GM12878 (cell line): ENCODE measurements at regions of chr1 and their contacts with region 1.

Region 1: GRCh38 chr1:206521143-206521542 is 13.8 kb downstream of the RASSF5 start:
- DNase-seq: no peak
- ATAC-seq: no peak
- H3K4me3 ChIP-seq: no peak overlapping the region
- H3K27ac ChIP-seq: no peak overlapping the region
- H3K4me1 ChIP-seq: peaks cover 4% of the 10 kb centered on the region; the same call in 1 of the 2 replicates
- H3K27me3 ChIP-seq: no peaks in the 10 kb centered on the region
- CTCF ChIP-seq: no peak
- EP300 ChIP-seq: no peak
- POLR2A ChIP-seq: no peak
- RAD21 ChIP-seq: no peak

Region 2: GRCh38 chr1:206507284-206508129 is 13.6 kb before region 1 on chr1 and contains the start of gene RASSF5:
- CTCF ChIA-PET with region 1: interaction called, 23 read pairs
- POLR2A ChIA-PET with region 1: interaction called, 14 read pairs
- RAD21 ChIA-PET with region 1: interaction called, 6 read pairs
- SMC1A ChIA-PET with region 1: interaction called, 11 read pairs
- in situ Hi-C with region 1: no loop called
- intact Hi-C with region 1: no loop called
- DNase-seq: no peak
- ATAC-seq: peak; percentile 78
- H3K4me3 ChIP-seq: peak within 1 kb of the TSS; percentile 72
- H3K27ac ChIP-seq: peak within 1 kb of the TSS; percentile 29; the same call in 1 of the 2 replicates
- H3K4me1 ChIP-seq: peaks cover 41% of the 10 kb centered on the region
- H3K27me3 ChIP-seq: no peaks in the 10 kb centered on the region
- CTCF ChIP-seq: no peak
- EP300 ChIP-seq: 0 out of 4 replicates have a peak, but pooled peaks of 1 of the 2 experiments have one; percentile 21
- POLR2A ChIP-seq: peak; percentile 83
- RAD21 ChIP-seq: no peak
- polyA plus RNA-seq, gene RASSF5: 14.0 to 25.4 TPM

Region 3: DNA sequence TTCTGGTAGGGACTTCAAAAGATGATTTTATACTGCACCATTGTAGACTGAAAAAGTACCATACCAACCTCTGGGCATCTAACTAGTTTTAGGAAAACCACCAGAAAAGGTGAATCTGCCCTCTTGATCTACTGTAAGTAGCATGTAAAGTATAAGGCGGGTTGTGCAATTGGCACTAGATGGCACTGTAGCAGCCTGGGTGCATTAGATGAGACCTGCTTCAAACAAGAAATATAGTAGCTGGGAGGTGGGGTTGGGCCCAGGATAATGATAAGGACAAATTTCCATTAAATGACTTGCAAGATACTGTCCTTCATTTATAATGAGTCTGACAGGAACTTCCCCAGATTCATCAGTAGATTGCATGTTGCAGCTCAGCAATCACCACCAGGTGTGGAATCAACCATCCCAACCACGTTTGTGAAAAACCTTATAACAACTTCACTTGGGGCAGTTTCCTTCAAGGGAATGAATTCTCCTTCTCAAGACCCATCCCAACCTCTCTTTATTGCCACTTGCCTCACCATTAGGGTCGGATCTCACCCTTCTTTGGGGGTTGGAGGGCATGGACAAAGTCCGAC is 288.5 kb after region 1 on chr1:
- CTCF ChIA-PET with region 1: no interaction called
- POLR2A ChIA-PET with region 1: no interaction called
- RAD21 ChIA-PET with region 1: no interaction called
- SMC1A ChIA-PET with region 1: no interaction called
- in situ Hi-C with region 1: no loop called
- intact Hi-C with region 1: no loop called
- DNase-seq: no peak
- ATAC-seq: peak; percentile 87
- H3K4me3 ChIP-seq: no peak overlapping the region
- H3K27ac ChIP-seq: no peak overlapping the region
- H3K4me1 ChIP-seq: peaks cover 11% of the 10 kb centered on the region
- H3K27me3 ChIP-seq: no peaks in the 10 kb centered on the region
- CTCF ChIP-seq: peak; percentile 61 to 65 (median 64)
- EP300 ChIP-seq: no peak
- POLR2A ChIP-seq: no peak
- RAD21 ChIP-seq: peak; percentile 72